ENCODE measurements at regions of chr6 and their contacts with region 1.

Region 1: DNA sequence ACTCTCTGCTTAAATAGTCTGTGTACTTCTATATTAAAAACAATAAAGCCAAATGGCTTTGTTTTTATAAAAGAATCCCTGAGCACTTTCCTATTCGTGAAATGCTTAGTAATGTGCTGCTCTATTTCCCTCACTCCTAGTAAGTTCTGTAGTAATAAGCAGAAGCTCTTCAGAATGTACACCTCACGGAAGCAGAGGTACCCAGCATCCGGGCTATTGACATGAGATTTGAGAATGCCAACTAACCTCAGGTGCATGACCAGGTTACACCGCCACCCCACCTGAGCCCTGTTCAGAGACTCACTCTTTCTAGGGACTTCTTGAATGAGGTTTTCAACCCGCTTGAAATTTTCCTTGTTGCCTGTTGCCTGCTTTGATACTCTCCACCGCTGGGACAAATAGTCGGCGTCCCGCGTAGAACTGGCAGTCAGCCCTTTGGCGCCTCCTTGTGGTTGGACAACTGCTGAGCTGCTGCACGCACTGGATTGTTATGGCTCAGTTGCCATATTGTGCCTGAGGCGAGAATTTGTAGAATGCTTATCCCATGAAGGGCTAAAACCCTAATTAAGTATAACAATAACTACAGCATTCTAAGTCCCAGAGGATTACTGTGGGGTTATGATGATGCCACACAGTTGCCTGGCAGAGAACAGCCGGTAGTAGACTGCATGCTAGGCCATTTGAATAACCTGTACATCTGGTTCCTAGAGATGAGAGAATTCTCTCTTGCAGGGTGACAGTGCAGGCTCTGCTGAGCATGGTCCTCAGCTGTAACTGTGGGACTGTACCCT is 95.4 kb downstream of the KHDC1L start:
- DNase-seq: peak; percentile 66 to 86 (median 70)
- ATAC-seq: peak; percentile 99
- H3K4me3 ChIP-seq: no peak overlapping the region
- H3K27ac ChIP-seq: no peak overlapping the region
- H3K4me1 ChIP-seq: no peaks in the 10 kb centered on the region; a peak in 1 of 5 replicates
- H3K27me3 ChIP-seq: no peaks in the 10 kb centered on the region
- CTCF ChIP-seq: peak; percentile 96 to 98 (median 98)
- EP300 ChIP-seq: no peak
- POLR2A ChIP-seq: no peak
- RAD21 ChIP-seq: peak; percentile 92 to 94

Region 2: GRCh38 chr6:72616406-72617015 is 513.3 kb before region 1 on chr6:
- CTCF ChIA-PET with region 1: interaction called, 4 read pairs
- POLR2A ChIA-PET with region 1: no interaction called
- in situ Hi-C with region 1: loop called (anchors 10 kb)
- intact Hi-C with region 1: loop called (anchors 1 kb)
- DNase-seq: peak in 2 of 4 experiments; percentile 28 to 56
- ATAC-seq: no peak
- H3K4me3 ChIP-seq: no peak overlapping the region
- H3K27ac ChIP-seq: no peak overlapping the region
- H3K4me1 ChIP-seq: peaks cover 7 to 15% of the 10 kb centered on the region in 2 experiments; a peak in 4 of 5 replicates
- H3K27me3 ChIP-seq: no peaks in the 10 kb centered on the region
- CTCF ChIP-seq: peak; percentile 37 to 70 (median 50); a peak in 4 of 6 replicates
- EP300 ChIP-seq: no peak
- POLR2A ChIP-seq: no peak
- RAD21 ChIP-seq: peak; percentile 57 to 72

Region 3: DNA sequence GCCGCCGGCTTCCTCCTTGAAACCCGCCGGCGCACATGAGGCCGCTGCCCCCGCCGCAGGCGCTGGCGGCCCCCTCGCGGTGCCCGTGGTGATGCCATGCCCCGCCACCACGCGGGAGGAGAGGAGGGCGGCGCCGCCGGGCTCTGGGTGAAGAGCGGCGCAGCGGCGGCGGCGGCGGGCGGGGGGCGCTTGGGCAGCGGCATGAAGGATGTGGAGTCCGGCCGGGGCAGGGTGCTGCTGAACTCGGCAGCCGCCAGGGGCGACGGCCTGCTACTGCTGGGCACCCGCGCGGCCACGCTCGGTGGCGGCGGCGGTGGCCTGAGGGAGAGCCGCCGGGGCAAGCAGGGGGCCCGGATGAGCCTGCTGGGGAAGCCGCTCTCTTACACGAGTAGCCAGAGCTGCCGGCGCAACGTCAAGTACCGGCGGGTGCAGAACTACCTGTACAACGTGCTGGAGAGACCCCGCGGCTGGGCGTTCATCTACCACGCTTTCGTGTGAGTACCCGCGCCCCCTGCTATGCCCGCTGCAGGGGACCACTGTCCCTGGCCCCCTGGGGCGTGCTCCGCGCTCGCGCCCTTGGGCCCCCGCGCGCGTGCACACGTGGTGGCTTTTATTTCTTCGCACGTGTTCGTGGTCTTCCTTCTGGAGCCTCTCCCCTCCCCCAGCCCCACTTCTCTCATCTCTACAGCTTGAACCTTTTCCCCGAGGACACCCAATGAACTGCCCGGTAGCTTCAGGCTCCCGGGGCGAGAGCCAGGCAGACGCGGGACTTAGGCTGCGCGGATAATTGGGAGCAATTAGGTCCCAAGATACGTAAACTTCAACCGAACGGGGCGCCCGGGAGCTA is 507.5 kb before region 1 on chr6:
- CTCF ChIA-PET with region 1: interaction called, 4 read pairs
- POLR2A ChIA-PET with region 1: no interaction called
- in situ Hi-C with region 1: loop called (anchors 10 kb)
- intact Hi-C with region 1: loop called (anchors 1 kb)
- DNase-seq: peak; percentile 49 to 60 (median 50)
- ATAC-seq: peak; percentile 58
- H3K4me3 ChIP-seq: peak overlapping the region; percentile 49
- H3K27ac ChIP-seq: peak overlapping the region; percentile 77
- H3K4me1 ChIP-seq: peaks cover 19 to 33% of the 10 kb centered on the region in 2 experiments; a peak in 4 of 5 replicates
- H3K27me3 ChIP-seq: no peaks in the 10 kb centered on the region
- CTCF ChIP-seq: peak in 1 of 3 experiments; percentile 25; a peak in 1 of 6 replicates
- EP300 ChIP-seq: no peak
- POLR2A ChIP-seq: no peak
- RAD21 ChIP-seq: no peak

Region 4: GRCh38 chr6:72704979-72705378 is 424.9 kb before region 1 on chr6:
- CTCF ChIA-PET with region 1: no interaction called
- POLR2A ChIA-PET with region 1: no interaction called
- in situ Hi-C with region 1: no loop called
- intact Hi-C with region 1: loop called (anchors 10 kb)
- DNase-seq: no peak
- ATAC-seq: 0 out of 3 replicates have a peak, but pooled peaks have one; percentile 43
- H3K4me3 ChIP-seq: no peak overlapping the region
- H3K27ac ChIP-seq: no peak overlapping the region
- H3K4me1 ChIP-seq: peaks cover 3 to 9% of the 10 kb centered on the region in 2 experiments; a peak in 2 of 5 replicates
- H3K27me3 ChIP-seq: no peaks in the 10 kb centered on the region
- CTCF ChIP-seq: peak in 1 of 3 experiments; percentile 8; a peak in 1 of 6 replicates
- EP300 ChIP-seq: no peak
- POLR2A ChIP-seq: no peak
- RAD21 ChIP-seq: no peak

Region 5: DNA sequence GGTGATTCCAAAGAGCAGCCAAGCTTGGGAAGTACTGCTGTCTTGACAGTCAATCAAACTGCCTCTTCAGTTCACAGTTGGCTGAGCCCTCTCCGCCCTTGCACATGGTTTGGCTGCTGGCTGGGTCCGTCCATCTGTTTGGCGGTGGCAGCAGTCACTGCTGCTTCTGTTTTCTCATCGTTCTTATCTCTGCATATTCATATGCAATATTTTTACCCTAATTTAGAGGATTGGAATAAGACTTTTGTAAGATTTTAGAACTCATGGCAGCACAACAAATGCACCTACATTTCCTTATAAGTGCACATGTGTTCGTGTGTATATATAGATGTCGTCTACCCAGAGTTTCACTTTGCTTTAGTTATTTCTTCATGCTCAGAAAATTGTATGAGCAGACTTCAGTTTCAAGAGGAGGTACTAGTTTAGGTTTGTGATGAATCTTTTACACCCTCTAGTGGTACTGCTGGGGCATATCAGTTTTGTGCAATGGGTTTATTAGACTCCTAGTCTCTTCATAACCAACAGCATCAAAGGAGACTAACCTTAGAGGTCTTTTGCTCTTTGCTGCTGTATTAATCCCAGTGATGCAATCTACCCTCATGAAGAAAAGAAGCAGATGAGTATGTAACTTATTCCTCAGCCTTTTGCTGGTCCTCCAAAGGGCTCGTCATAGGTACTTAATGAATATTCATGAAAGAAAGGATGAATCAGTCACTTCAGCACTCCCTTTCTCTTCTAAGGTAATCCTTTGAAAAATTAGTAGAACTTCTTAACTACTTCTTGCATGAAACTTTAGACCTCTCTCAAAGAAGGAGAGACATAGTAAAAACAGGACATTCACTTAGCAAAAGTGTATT is 51.1 kb after region 1 on chr6:
- CTCF ChIA-PET with region 1: no interaction called
- POLR2A ChIA-PET with region 1: interaction called, 3 read pairs
- in situ Hi-C with region 1: no loop called
- intact Hi-C with region 1: loop called (anchors 2 kb)
- DNase-seq: peak; percentile 30 to 55 (median 42)
- ATAC-seq: peak; percentile 96
- H3K4me3 ChIP-seq: no peak overlapping the region
- H3K27ac ChIP-seq: no peak overlapping the region
- H3K4me1 ChIP-seq: no peaks in the 10 kb centered on the region; a peak in 1 of 5 replicates
- H3K27me3 ChIP-seq: no peaks in the 10 kb centered on the region
- CTCF ChIP-seq: peak; percentile 59 to 85 (median 80); a peak in 5 of 6 replicates
- EP300 ChIP-seq: no peak
- POLR2A ChIP-seq: no peak
- RAD21 ChIP-seq: peak; percentile 85 to 91

Measured in K562 (cell line).